ENCODE measurements at regions of chr11 and their contacts with region 1.

Region 1: GRCh38 chr11:48172818-48173609 is 43.6 kb upstream of the OR4B1 start:
- DNase-seq: peak; percentile 73
- CTCF ChIP-seq: peak; percentile 79

Region 2: GRCh38 chr11:48161951-48162884 is 10.8 kb before region 1 on chr11:
- CTCF ChIA-PET with region 1: interaction called, 41 read pairs
- POLR2A ChIA-PET with region 1: no interaction called
- DNase-seq: no peak
- CTCF ChIP-seq: no peak